Heart left ventricle (tissue), 16 donors: ENCODE measurements at regions of chr17 and their contacts with region 1.

Region 1: DNA sequence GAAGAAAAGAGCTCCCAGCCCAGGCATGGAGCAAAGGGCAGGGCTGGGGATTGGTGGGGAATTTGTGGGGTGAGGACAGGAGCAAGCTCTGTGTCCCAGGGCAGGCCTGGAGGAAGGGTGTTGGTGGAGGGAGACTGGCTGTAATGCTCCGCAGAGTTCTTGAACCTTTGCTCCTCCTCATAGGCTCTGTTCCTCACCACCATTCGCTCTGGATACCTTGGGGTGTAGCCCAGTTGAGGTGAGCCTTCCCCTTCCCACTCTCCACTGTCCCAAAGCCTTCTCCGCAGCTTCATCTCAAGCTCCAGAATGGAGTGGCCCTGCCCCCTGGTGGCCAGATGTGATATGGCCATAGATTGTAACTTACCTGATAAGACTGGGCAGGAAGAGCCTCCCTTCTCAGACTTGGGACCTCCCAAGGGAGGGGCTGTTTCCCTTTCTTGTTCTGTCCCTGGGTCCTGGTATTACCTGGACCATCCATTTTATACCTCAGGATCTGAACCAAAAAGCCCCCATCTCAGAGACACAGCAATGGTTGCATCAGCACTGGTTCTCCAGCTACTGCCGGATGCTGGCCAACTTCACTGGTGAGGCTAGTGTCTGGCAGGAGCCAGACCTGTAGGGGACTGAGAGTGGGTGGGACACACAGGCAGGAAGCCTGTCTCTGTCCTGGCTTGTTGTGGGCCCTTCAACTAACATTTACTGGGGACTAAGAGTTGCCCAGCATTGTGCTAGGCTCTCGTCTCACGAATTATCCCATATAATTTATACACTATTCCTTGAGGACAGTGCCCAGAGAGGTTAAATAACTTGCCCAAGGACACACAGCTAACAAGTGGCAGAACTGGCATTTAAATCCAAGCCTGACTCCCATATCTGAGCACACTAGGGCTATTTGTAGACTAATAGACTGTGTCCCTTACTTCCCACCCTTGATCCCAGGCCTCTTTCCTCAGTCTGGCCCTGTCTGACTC is 19.1 kb upstream of the STAC2 start:
- DNase-seq: peak; percentile 77 to 86 (median 79)
- ATAC-seq: peak; percentile 56 to 93 (median 87)
- H3K4me3 ChIP-seq: no peak overlapping the region
- H3K27ac ChIP-seq: no peak overlapping the region
- H3K4me1 ChIP-seq: peaks cover 0 to 13% (median 6%) of the 10 kb centered on the region in 12 donors
- H3K27me3 ChIP-seq: no peaks in the 10 kb centered on the region
- CTCF ChIP-seq: peak; percentile 87 to 99 (median 95)
- POLR2A ChIP-seq: no peak

Region 2: GRCh38 chr17:38967290-38967738 is 277.6 kb before region 1 on chr17 and contains the start of gene FBXO47:
- intact Hi-C with region 1: loop called in 2 of 10 experiments (anchors 10 kb)
- DNase-seq: peak; percentile 92 to 97 (median 94)
- ATAC-seq: peak; percentile 96 to 100 (median 99)
- H3K4me3 ChIP-seq: peak within 1 kb of the TSS in 10 of 12 donors; percentile 3 to 57 (median 42)
- H3K27ac ChIP-seq: peak within 1 kb of the TSS in 11 of 12 donors; percentile 40 to 80 (median 72)
- H3K4me1 ChIP-seq: peaks cover 0 to 10% (median 0%) of the 10 kb centered on the region in 12 donors
- H3K27me3 ChIP-seq: no peaks in the 10 kb centered on the region
- CTCF ChIP-seq: peak in 9 of 12 donors; percentile 6 to 63 (median 33)
- POLR2A ChIP-seq: peak in 1 of 2 donors; percentile 68
- total RNA-seq, gene FBXO47: 0.11 TPM in 1 of 9 donors, not detected in the others

Region 3: GRCh38 chr17:38982858-38983746 is 261.8 kb before region 1 on chr17:
- intact Hi-C with region 1: loop called in 7 of 10 experiments (anchors 2 to 10 kb)
- DNase-seq: peak in 3 of 5 donors; percentile 39 to 54 (median 42)
- ATAC-seq: peak in 3 of 4 donors; percentile 69 to 79 (median 76)
- H3K4me3 ChIP-seq: no peak overlapping the region
- H3K27ac ChIP-seq: peak overlapping the region in 5 of 12 donors; percentile 8 to 75 (median 59)
- H3K4me1 ChIP-seq: peaks cover 0 to 19% (median 0%) of the 10 kb centered on the region in 12 donors
- H3K27me3 ChIP-seq: no peaks in the 10 kb centered on the region
- CTCF ChIP-seq: peak; percentile 66 to 88 (median 82)
- POLR2A ChIP-seq: no peak

Region 4: GRCh38 chr17:39069114-39069756 is 175.7 kb before region 1 on chr17:
- intact Hi-C with region 1: loop called in 1 of 10 experiments (anchors 10 kb)
- DNase-seq: no peak
- ATAC-seq: peak; percentile 36 to 65 (median 62)
- H3K4me3 ChIP-seq: no peak overlapping the region
- H3K27ac ChIP-seq: no peak overlapping the region
- H3K4me1 ChIP-seq: peaks cover 0 to 7% (median 0%) of the 10 kb centered on the region in 12 donors
- H3K27me3 ChIP-seq: no peaks in the 10 kb centered on the region
- CTCF ChIP-seq: peak; percentile 44 to 68 (median 54)
- POLR2A ChIP-seq: no peak

Region 5: GRCh38 chr17:39209317-39210092 is 35.4 kb before region 1 on chr17:
- intact Hi-C with region 1: loop called in 8 of 10 experiments (anchors 1 to 5 kb)
- DNase-seq: peak; percentile 72 to 90 (median 79)
- ATAC-seq: peak; percentile 49 to 86 (median 79)
- H3K4me3 ChIP-seq: peak overlapping the region; percentile 20 to 59 (median 48)
- H3K27ac ChIP-seq: peak overlapping the region in 7 of 12 donors; percentile 20 to 78 (median 49)
- H3K4me1 ChIP-seq: peaks cover 3 to 23% (median 12%) of the 10 kb centered on the region in 12 donors
- H3K27me3 ChIP-seq: peaks cover 0 to 9% (median 0%) of the 10 kb centered on the region in 9 donors
- CTCF ChIP-seq: no peak
- POLR2A ChIP-seq: peak in 1 of 2 donors; percentile 42

Region 6: DNA sequence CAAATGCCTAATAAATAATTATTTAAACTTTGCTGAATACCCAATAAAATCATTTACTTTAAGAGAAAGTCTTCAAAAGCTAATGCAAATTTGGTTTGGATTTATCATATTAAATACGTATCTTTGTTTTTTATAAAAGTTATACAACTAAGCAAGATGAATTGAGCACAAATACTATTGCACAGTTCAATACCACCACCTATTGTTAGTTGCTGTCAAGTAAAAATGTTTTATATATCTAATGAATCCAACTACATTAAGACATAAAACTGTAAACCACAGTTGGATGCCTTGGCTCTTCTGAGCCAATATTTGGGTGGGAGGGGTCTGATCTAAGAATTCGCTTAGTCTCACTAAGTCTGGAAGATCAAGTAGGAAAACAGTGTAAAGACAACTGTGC is 148.9 kb after region 1 on chr17:
- intact Hi-C with region 1: loop called in 1 of 10 experiments (anchors 10 kb)
- DNase-seq: no peak
- ATAC-seq: peak in 2 of 4 donors; percentile 36 to 38
- H3K4me3 ChIP-seq: no peak overlapping the region
- H3K27ac ChIP-seq: no peak overlapping the region
- H3K4me1 ChIP-seq: peaks cover 0 to 30% (median 14%) of the 10 kb centered on the region in 12 donors
- H3K27me3 ChIP-seq: no peaks in the 10 kb centered on the region
- CTCF ChIP-seq: peak in 7 of 12 donors; percentile 10 to 47 (median 29)
- POLR2A ChIP-seq: no peak